ENCODE measurements at regions of chr5 and their contacts with region 1.

Region 1: GRCh38 chr5:119411935-119412602 is 40.2 kb upstream of the HSD17B4 start:
- DNase-seq: peak; percentile 79
- H3K4me3 ChIP-seq: peak overlapping the region; percentile 55
- H3K27ac ChIP-seq: no peak overlapping the region
- H3K4me1 ChIP-seq: peaks cover 37% of the 10 kb centered on the region
- CTCF ChIP-seq: peak; percentile 99

Region 2: DNA sequence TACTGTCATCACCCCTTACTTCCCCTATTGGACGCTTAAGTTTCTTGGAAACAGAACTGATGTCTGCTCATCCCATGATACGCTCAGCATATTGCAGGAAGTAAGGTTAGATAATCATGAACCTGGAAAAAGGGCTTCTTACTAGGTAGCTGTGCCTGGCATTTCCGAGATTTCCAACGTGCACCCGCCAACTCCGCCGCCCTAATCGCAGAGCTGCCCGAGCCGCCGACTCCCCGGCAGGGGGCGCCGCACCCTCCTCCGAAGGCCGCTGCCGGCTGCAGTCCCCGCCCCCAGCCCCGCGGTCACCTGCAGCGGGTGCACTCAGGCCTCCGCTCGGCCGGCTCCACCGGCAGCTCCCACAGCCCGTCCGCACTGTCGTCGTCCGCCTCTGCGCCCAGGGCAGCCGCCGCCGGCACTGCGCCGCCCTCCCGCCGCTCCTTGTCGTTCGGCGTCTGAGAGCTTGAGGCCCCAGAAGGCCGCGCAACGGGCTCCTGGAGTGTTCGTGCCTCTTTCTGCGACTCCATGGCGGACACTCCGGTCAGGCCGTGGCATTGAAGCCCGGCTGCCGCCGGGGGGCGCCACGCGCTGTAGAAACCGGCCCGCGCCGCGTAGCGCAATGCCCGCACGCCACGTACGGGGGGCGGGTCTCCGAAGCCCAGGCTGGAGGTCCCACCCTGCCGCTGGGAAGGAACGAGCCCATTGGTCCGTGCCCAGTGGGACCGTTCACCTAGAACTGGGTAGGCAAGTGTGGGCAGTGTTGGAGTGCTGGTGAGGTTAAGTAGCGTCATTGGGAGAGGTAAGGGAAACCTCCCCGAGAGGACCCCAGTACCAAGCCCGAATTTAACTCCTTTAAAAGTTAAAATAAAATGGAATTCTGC is 423.8 kb before region 1 on chr5 and contains the start of gene DTWD2:
- CTCF ChIA-PET with region 1: interaction called, 21 read pairs
- POLR2A ChIA-PET with region 1: interaction called, 7 read pairs
- intact Hi-C with region 1: loop called (anchors 1 kb)
- DNase-seq: peak; percentile 96
- H3K4me3 ChIP-seq: peak within 1 kb of the TSS; percentile 75
- H3K27ac ChIP-seq: peak within 1 kb of the TSS; percentile 77
- H3K4me1 ChIP-seq: peaks cover 33% of the 10 kb centered on the region
- CTCF ChIP-seq: peak; percentile 98
- total RNA-seq, gene DTWD2: 4.2 and 8.6 TPM in 2 replicates

Region 3: GRCh38 chr5:119220576-119221197 is 191.4 kb before region 1 on chr5:
- CTCF ChIA-PET with region 1: no interaction called
- POLR2A ChIA-PET with region 1: no interaction called
- intact Hi-C with region 1: loop called (anchors 5 kb)
- DNase-seq: peak; percentile 46
- H3K4me3 ChIP-seq: no peak overlapping the region
- H3K27ac ChIP-seq: peak overlapping the region; percentile 3
- H3K4me1 ChIP-seq: peaks cover 16% of the 10 kb centered on the region
- CTCF ChIP-seq: no peak

Region 4: GRCh38 chr5:119315516-119315949 is 96.5 kb before region 1 on chr5:
- CTCF ChIA-PET with region 1: interaction called, 14 read pairs
- POLR2A ChIA-PET with region 1: interaction called, 27 read pairs
- intact Hi-C with region 1: loop called (anchors 1 kb)
- DNase-seq: peak; percentile 81
- H3K4me3 ChIP-seq: peak overlapping the region; percentile 5
- H3K27ac ChIP-seq: peak overlapping the region; percentile 57
- H3K4me1 ChIP-seq: peaks cover 100% of the 10 kb centered on the region
- CTCF ChIP-seq: peak; percentile 84

Region 5: DNA sequence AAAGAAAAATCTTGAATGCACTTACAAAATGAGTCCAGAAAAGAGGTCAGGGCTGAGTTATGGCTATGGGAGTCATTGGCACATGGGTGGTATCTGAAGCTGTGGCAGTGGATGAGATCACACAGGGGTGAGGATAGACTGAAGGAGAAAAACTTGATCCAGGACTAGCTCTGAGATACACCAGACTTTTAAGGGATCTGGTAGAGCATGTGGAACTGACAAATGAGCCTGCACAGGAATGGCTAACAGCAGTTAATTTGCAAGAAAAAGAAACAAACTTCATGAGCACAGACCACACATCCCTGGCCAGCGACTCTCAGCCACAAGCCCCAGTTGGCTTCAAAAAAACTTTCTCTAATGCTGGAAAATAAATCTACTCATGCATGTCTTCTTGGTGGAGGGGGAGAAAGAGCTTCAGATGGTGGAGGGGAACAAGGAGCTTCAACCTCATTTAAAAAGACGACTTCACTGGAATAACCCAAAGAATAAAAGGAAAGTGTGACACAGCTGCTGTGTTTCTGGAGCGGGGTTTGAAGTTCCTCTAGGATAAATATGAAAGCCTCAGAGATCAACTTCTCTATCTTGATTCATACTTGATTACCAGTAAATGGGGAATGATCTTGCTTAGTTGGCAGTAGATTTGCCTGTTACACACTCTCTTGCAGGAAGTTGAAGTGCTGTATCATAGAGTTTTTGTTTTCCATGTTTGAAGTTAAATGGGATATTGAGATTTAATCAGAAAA is 22.6 kb before region 1 on chr5:
- CTCF ChIA-PET with region 1: interaction called, 3 read pairs
- POLR2A ChIA-PET with region 1: interaction called, 4 read pairs
- intact Hi-C with region 1: loop called (anchors 2 kb)
- DNase-seq: no peak
- H3K4me3 ChIP-seq: peak overlapping the region; percentile 17
- H3K27ac ChIP-seq: peak overlapping the region; percentile 67
- H3K4me1 ChIP-seq: peaks cover 87% of the 10 kb centered on the region
- CTCF ChIP-seq: no peak

Measured in OCI-LY7 (cell line).